ENCODE measurements at regions of chr11 and their contacts with region 1.

Region 1: GRCh38 chr11:85810871-85811611 is at the start of gene SYTL2:
- DNase-seq: peak; percentile 69 to 87 (median 75)
- ATAC-seq: peak; percentile 95
- H3K4me3 ChIP-seq: peak within 1 kb of the TSS; percentile 86
- H3K4me3 Mint-ChIP-seq: peak within 1 kb of the TSS; percentile 87 to 97 (median 95)
- H3K27ac ChIP-seq: peak within 1 kb of the TSS; percentile 64
- H3K27ac Mint-ChIP-seq: peak within 1 kb of the TSS; percentile 79 to 98 (median 93)
- H3K4me1 ChIP-seq: peaks cover 14 to 32% of the 10 kb centered on the region in 2 donors
- H3K4me1 Mint-ChIP-seq: peaks cover 32 to 61% (median 52%) of the 10 kb centered on the region in 7 donors
- H3K27me3 ChIP-seq: no peaks in the 10 kb centered on the region
- H3K27me3 Mint-ChIP-seq: peaks cover 0 to 10% (median 0%) of the 10 kb centered on the region in 5 donors
- total RNA-seq, gene SYTL2: 24.8 to 62.9 (median 27.5) TPM

Region 2: GRCh38 chr11:85627998-85628770 is 182.9 kb before region 1 on chr11 and contains the start of gene TMEM126B:
- CTCF ChIA-PET with region 1: no interaction called
- POLR2A ChIA-PET with region 1: no interaction called
- intact Hi-C with region 1: loop called in 1 of 2 experiments (anchors 1 kb)
- DNase-seq: peak; percentile 85 to 95 (median 94)
- ATAC-seq: peak; percentile 99
- H3K4me3 ChIP-seq: peak within 1 kb of the TSS; percentile 98
- H3K4me3 Mint-ChIP-seq: peak within 1 kb of the TSS; percentile 84 to 98 (median 94)
- H3K27ac ChIP-seq: peak within 1 kb of the TSS; percentile 85
- H3K27ac Mint-ChIP-seq: peak within 1 kb of the TSS; percentile 89 to 97 (median 94)
- H3K4me1 ChIP-seq: peaks cover 13 to 22% of the 10 kb centered on the region in 2 donors
- H3K4me1 Mint-ChIP-seq: peaks cover 17 to 67% (median 48%) of the 10 kb centered on the region in 7 donors
- H3K27me3 ChIP-seq: no peaks in the 10 kb centered on the region
- H3K27me3 Mint-ChIP-seq: peaks cover 0 to 9% (median 0%) of the 10 kb centered on the region in 5 donors
- total RNA-seq, gene TMEM126B: 22.1 to 50.4 (median 36.4) TPM

Region 3: GRCh38 chr11:85732965-85733364 is 78.1 kb before region 1 on chr11:
- CTCF ChIA-PET with region 1: no interaction called
- POLR2A ChIA-PET with region 1: no interaction called
- intact Hi-C with region 1: no loop called
- DNase-seq: no peak
- ATAC-seq: no peak
- H3K4me3 ChIP-seq: no peak overlapping the region
- H3K4me3 Mint-ChIP-seq: no peak overlapping the region
- H3K27ac ChIP-seq: no peak overlapping the region
- H3K27ac Mint-ChIP-seq: no peak overlapping the region
- H3K4me1 ChIP-seq: peaks cover 9 to 13% of the 10 kb centered on the region in 2 donors
- H3K4me1 Mint-ChIP-seq: peaks cover 8 to 37% (median 20%) of the 10 kb centered on the region in 7 donors
- H3K27me3 ChIP-seq: no peaks in the 10 kb centered on the region
- H3K27me3 Mint-ChIP-seq: no peaks in the 10 kb centered on the region

Region 4: DNA sequence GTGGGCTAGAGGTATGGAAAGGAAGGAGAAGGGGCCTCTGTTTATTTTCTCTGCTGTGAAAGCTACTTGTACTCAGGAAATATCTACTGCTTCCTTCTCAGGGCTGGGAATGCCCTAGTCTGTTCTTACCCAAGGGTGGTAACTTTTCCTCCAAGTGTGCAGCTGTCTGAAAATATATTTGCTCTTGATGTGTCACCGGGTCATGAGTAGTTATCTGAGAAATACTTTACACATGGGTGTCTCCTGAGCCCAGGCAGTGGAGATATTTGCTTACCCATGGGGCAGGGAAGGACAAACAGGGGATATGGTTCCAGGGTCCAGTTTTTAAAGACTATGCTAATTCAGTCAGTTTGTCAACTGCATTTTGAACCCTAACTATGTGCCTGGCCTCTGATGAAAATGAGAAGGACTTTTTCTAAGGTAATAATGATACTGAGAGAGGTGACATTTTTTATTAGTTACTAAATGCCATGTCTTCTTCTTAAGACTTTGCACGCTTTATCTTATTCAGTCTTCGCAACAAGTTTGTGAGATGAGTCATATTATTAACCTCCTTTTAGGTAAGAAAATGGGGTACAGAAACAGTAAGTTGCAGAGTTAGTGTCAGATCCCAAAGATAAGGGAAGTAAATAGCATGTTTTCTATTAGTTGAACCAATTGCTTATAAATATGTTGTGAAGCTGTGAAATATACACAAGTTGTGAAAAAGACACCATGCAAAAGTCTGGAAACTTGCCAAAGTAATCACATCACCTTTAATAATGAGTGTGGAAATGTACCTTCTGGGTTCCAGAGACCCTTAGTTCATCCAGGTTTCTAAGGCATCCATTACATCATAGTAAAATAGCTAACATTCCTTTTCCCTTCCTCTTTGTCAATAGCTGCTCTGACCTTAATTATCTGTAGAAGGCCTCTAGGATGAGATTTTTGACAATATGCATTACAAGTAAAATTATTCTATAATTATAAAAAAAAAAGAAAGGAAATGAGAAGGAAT is 22.9 kb before region 1 on chr11:
- CTCF ChIA-PET with region 1: no interaction called
- POLR2A ChIA-PET with region 1: interaction called, 9 read pairs
- intact Hi-C with region 1: loop called in 1 of 2 experiments (anchors 2 kb)
- DNase-seq: no peak
- ATAC-seq: no peak
- H3K4me3 ChIP-seq: no peak overlapping the region
- H3K4me3 Mint-ChIP-seq: peak overlapping the region in 1 of 10 donors; percentile 29
- H3K27ac ChIP-seq: no peak overlapping the region
- H3K27ac Mint-ChIP-seq: peak overlapping the region in 4 of 9 donors; percentile 37 to 72 (median 54)
- H3K4me1 ChIP-seq: peaks cover 0 to 5% of the 10 kb centered on the region in 2 donors
- H3K4me1 Mint-ChIP-seq: peaks cover 2 to 59% (median 35%) of the 10 kb centered on the region in 7 donors
- H3K27me3 ChIP-seq: no peaks in the 10 kb centered on the region
- H3K27me3 Mint-ChIP-seq: no peaks in the 10 kb centered on the region

Region 5: DNA sequence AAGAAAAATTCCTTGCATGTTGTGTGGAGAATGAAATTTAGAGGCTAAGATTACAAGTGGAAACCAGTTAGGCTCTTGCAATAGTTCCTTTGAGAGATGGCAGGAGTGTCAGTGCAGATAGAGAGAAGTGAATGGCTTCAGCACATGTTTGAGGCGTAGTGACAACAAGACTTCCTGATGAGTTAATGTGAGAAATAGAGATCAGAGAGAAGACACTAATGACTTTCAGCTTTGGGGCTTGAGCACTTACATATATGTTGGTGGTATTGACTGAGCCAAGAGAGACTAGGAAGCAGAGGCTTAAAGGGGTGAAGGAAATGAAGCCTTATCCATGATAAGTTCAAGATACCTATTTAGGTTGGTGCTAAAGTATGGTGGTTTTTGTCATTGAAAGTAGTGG is 313.8 kb after region 1 on chr11:
- CTCF ChIA-PET with region 1: no interaction called
- POLR2A ChIA-PET with region 1: no interaction called
- intact Hi-C with region 1: no loop called
- DNase-seq: no peak
- ATAC-seq: no peak
- H3K4me3 ChIP-seq: no peak overlapping the region
- H3K4me3 Mint-ChIP-seq: no peak overlapping the region
- H3K27ac ChIP-seq: no peak overlapping the region
- H3K27ac Mint-ChIP-seq: peak overlapping the region in 1 of 9 donors; percentile 13
- H3K4me1 ChIP-seq: no peaks in the 10 kb centered on the region
- H3K4me1 Mint-ChIP-seq: peaks cover 0 to 10% (median 0%) of the 10 kb centered on the region in 7 donors
- H3K27me3 ChIP-seq: no peaks in the 10 kb centered on the region
- H3K27me3 Mint-ChIP-seq: peaks cover 0 to 10% (median 4%) of the 10 kb centered on the region in 5 donors

Region 6: GRCh38 chr11:86440305-86440716 is 629.3 kb after region 1 on chr11:
- CTCF ChIA-PET with region 1: no interaction called
- POLR2A ChIA-PET with region 1: no interaction called
- intact Hi-C with region 1: no loop called
- DNase-seq: no peak
- ATAC-seq: no peak
- H3K4me3 ChIP-seq: no peak overlapping the region
- H3K4me3 Mint-ChIP-seq: no peak overlapping the region
- H3K27ac ChIP-seq: no peak overlapping the region
- H3K27ac Mint-ChIP-seq: no peak overlapping the region
- H3K4me1 ChIP-seq: no peaks in the 10 kb centered on the region
- H3K4me1 Mint-ChIP-seq: peaks cover 0 to 7% (median 0%) of the 10 kb centered on the region in 7 donors
- H3K27me3 ChIP-seq: no peaks in the 10 kb centered on the region
- H3K27me3 Mint-ChIP-seq: no peaks in the 10 kb centered on the region

Measured in naive thymus-derived CD4-positive, alpha-beta T cell (primary cell).